ENCODE measurements at regions of chr6 and their contacts with region 1.

Region 1: DNA sequence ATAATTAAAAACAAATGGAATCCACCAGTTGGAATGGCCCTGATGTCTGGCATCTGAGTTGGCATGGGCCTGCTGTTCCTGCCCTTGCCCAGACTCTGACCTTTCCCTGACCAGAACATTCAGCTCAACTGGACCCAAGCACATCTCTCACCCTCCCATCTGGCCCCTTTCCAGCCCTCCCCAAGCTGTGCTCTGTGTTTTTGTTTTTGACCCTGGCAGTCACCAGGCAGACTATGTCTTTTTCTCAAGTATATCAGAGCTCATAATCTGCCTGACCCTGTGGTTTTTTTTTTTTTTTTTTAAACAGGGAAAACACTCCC is 117.6 kb downstream of the TRDN start:
- DNase-seq: peak; percentile 88
- ATAC-seq: peak; percentile 93

Region 2: GRCh38 chr6:123619156-123619555 is 100.0 kb after region 1 on chr6:
- intact Hi-C with region 1: loop called (anchors 5 kb)
- DNase-seq: no peak
- ATAC-seq: peak; percentile 32

Region 3: DNA sequence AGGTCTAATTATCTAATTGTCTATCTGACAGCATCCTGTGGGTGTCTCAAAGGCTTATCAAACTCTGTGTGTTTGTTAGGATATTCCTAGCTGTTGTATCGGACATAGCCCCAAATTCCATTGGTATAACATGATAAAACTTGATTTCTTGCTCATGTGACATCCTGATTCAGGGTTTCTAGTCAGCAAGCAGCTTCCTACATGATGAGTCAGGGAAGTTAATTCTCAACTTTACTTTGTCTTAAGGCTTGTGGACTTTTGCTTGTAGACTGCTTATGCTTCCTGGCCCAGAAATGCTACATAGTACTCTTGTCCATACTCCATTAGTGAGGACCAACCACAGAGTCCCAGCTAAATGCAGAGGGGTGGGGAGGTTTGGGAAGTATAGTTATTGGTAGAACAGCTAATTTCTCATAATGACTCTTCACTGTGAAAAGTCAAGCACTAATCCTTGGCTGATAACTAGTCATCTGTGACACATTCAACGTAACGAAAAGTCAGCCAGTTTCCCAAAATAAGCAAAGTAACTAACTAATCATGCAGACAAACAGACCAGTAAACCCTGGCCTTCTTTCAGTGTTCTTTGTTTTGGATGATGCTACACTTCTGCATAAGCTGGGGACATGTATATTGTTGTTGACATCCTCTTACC is 310.3 kb after region 1 on chr6:
- intact Hi-C with region 1: no loop called
- DNase-seq: no peak
- ATAC-seq: no peak